Activated CD4-positive, alpha-beta memory T cell treated with anti-CD3 and anti-CD28 coated beads, Interleukin-2, amount 10 ng/mL, durations not matched to agents 7 days and 5 days (primary cell): ENCODE measurements at regions of chr17 and their contacts with region 1.

Region 1: DNA sequence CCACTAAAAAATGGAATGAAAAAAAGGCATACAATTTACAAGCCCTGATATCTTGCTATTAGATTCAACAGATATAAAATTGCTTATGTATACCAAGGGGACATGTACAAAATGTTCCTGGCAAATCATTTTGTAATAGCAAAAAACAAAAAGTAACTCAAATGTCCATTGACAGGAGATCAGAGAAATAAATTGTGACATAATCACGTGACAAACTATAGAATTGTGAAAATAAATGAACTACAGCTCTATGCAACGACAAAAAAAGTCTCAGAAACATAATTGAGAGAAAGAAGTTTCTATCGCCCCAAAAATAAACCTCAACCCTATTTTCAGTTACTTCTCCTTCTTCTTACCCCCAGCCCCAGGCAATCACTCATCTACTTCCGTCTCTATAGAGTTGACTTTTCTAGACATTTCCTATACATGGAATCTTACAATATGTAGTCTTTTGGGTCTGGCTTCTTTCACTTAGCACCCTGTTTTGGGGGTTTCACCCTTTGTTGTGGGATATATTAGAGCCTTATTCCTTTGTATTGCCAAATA is 12.1 kb upstream of the ACE start:
- DNase-seq: no peak
- H3K4me3 Mint-ChIP-seq: no peak overlapping the region
- H3K27ac Mint-ChIP-seq: no peak overlapping the region
- H3K4me1 Mint-ChIP-seq: no peaks in the 10 kb centered on the region
- H3K27me3 Mint-ChIP-seq: peaks cover 15% of the 10 kb centered on the region

Region 2: GRCh38 chr17:63478791-63479494 is 14.2 kb after region 1 on chr17:
- CTCF ChIA-PET with region 1: interaction called, 12 read pairs
- POLR2A ChIA-PET with region 1: no interaction called
- DNase-seq: peak; percentile 84
- H3K4me3 Mint-ChIP-seq: peak overlapping the region; percentile 74
- H3K27ac Mint-ChIP-seq: no peak overlapping the region
- H3K4me1 Mint-ChIP-seq: peaks cover 16% of the 10 kb centered on the region
- H3K27me3 Mint-ChIP-seq: peaks cover 33% of the 10 kb centered on the region